ENCODE measurements at regions of chr15 and their contacts with region 1.

Region 1: GRCh38 chr15:72375847-72376581 is at the start of gene HEXA:
- DNase-seq: peak; percentile 99
- ATAC-seq: peak; percentile 83
- H3K4me3 Mint-ChIP-seq: peak within 1 kb of the TSS; percentile 89
- H3K27ac Mint-ChIP-seq: peak within 1 kb of the TSS; percentile 96
- H3K4me1 Mint-ChIP-seq: peaks cover 45% of the 10 kb centered on the region
- H3K27me3 Mint-ChIP-seq: no peaks in the 10 kb centered on the region
- total RNA-seq, gene HEXA: 38.8 to 54.2 TPM

Region 2: DNA sequence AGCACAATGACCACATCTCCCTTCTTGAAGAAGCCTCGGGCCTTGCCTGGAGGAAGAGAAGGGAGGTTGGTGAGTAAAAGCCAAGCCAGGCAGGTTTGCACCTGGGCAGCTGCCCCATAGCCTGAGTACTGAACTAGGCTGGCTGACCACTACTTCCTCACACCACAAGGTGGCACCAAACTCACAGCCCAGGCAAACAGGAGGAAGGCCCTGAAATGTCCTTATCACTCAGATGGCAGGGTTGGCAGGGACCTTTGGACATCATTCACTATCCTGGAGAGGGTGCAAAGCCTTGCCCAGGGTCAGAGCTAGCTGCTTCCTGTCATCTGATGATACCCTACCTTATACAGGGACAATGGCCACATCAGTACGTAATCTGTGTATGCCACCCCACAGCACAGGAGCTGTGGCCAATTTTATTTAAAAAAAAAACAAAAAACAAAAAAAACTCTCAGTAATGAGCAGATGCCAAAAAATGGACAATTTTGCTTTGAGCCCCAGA is 176.3 kb before region 1 on chr15:
- CTCF ChIA-PET with region 1: no interaction called
- POLR2A ChIA-PET with region 1: interaction called, 4 read pairs
- intact Hi-C with region 1: loop called in 1 of 2 experiments (anchors 2 kb)
- DNase-seq: peak; percentile 82
- ATAC-seq: peak; percentile 47
- H3K4me3 Mint-ChIP-seq: no peak overlapping the region
- H3K27ac Mint-ChIP-seq: no peak overlapping the region
- H3K4me1 Mint-ChIP-seq: peaks cover 19% of the 10 kb centered on the region
- H3K27me3 Mint-ChIP-seq: peaks cover 12% of the 10 kb centered on the region

Region 3: DNA sequence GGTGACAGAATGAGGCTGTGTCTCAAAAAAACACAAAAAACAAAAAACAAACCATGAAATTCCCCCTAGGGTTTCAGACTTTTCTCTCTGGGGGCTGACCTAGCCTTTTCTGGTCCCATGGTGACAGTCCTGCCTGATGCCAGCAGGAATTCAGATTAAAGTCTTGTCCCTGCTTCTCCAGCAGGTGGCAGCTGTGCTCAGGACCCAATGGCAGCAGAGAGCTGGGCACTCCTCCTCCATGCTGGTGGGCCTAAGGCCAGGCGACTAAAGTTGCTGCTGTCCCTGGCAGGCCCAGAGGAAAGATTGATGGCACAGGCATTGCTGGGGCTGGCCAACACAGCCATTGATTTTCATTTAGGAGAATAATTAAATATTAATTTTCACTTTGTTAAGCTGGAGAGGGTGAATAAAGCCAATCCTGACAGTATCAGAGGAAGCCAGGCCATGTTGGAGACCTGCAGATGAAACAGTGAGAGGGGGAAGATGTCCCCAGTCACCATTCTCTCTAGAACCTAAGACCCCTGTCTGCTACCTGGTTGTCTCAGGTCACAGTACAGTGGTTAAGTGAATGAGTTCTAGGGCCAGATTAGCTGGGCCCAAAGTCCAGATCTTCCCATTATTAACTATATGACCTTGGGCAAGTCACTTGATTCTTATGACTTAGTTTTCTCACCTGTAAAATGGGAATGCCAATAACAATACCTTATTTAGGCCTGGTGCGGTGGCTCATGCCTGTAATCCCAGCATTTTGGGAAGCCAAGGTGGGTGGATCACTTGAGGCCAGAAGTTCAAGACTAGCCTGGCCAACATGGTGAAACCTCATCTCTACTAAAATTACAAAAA is 63.2 kb before region 1 on chr15:
- CTCF ChIA-PET with region 1: interaction called, 3 read pairs
- POLR2A ChIA-PET with region 1: no interaction called
- intact Hi-C with region 1: loop called (anchors 2 to 5 kb)
- DNase-seq: peak; percentile 80
- ATAC-seq: peak; percentile 99
- H3K4me3 Mint-ChIP-seq: no peak overlapping the region
- H3K27ac Mint-ChIP-seq: no peak overlapping the region
- H3K4me1 Mint-ChIP-seq: no peaks in the 10 kb centered on the region
- H3K27me3 Mint-ChIP-seq: no peaks in the 10 kb centered on the region

Region 4: DNA sequence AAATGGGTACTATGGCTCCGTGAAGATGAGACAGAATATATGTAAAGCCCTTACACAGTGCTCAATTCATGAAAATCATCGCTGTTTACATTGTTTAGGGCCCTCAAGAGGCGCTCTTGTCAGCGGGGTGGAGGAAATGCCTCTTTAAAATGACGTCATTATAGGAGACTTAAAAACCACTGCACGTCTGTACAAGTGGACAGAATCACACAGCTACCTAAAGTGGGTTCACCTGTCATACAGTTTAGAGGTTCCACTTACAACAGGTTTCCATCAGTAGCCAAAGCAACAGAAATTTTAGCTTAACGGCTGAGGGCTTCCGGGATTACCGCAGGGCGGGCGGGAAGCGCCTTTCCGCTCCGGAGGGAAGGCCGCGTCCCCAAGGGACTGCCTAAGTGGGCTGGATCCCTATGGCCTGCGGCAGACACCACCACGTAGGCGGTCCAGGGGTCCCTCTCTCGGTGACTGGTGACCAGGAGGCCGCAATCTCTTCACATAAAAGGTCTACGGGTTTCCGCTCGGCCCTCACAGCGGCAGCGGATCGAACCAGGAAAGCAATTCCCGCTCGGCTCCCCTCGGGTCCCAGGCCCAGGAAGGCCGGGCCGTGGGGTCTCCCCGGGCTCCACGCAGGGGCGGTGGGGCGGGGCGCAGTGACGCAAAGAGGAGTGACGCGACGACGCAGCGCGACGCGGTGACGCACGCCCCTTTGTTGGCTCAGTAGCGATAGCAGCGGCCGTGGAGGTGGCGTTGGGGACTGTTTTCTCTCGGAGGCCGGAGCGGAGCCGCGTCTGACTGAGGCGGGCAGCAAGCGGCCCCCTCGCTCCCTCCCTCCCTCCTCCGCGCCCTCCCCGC is 97.8 kb after region 1 on chr15 and contains the start of gene ARIH1:
- CTCF ChIA-PET with region 1: interaction called, 3 read pairs
- POLR2A ChIA-PET with region 1: interaction called, 7 read pairs
- intact Hi-C with region 1: loop called (anchors 1 kb)
- DNase-seq: peak; percentile 97
- ATAC-seq: peak; percentile 78
- H3K4me3 Mint-ChIP-seq: peak within 1 kb of the TSS; percentile 92
- H3K27ac Mint-ChIP-seq: peak within 1 kb of the TSS; percentile 92
- H3K4me1 Mint-ChIP-seq: peaks cover 36% of the 10 kb centered on the region
- H3K27me3 Mint-ChIP-seq: no peaks in the 10 kb centered on the region
- total RNA-seq, gene ARIH1: 177 to 195 TPM